ENCODE measurements at regions of chr7 and their contacts with region 1.

Region 1: GRCh38 chr7:85829817-85830432 is 643.1 kb upstream of the SEMA3D start:
- DNase-seq: no peak
- H3K4me3 ChIP-seq: no peak overlapping the region
- H3K27ac ChIP-seq: no peak overlapping the region
- H3K4me1 ChIP-seq: no peaks in the 10 kb centered on the region
- H3K27me3 ChIP-seq: no peaks in the 10 kb centered on the region
- CTCF ChIP-seq: peak; percentile 62

Region 2: DNA sequence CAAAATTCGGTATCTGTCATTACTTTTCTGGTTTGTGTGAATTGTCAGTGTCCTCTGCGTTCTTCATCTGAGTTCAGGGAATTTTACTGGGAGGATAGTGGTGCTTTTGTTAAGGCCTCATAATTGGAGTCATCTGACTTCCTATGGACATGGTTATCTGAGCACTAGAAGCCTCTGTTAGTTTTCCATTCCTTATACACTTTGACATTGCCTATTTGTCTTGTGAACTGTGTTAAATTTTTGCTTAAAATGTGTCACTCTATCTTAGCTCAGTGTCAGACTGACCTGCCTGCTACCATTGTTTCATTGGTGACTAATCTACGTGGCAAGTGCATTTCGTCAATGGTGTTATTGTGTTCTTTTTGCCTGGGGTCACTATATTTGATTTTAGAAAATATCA is 1888.6 kb before region 1 on chr7:
- CTCF ChIA-PET with region 1: interaction called, 3 read pairs
- POLR2A ChIA-PET with region 1: no interaction called
- intact Hi-C with region 1: loop called (anchors 5 kb)
- DNase-seq: no peak
- H3K4me3 ChIP-seq: no peak overlapping the region
- H3K27ac ChIP-seq: no peak overlapping the region
- H3K4me1 ChIP-seq: no peaks in the 10 kb centered on the region
- H3K27me3 ChIP-seq: no peaks in the 10 kb centered on the region
- CTCF ChIP-seq: no peak

Region 3: GRCh38 chr7:85030893-85031292 is 799.0 kb before region 1 on chr7:
- CTCF ChIA-PET with region 1: interaction called, 11 read pairs
- POLR2A ChIA-PET with region 1: no interaction called
- intact Hi-C with region 1: loop called (anchors 1 kb)
- DNase-seq: no peak
- H3K4me3 ChIP-seq: no peak overlapping the region
- H3K27ac ChIP-seq: no peak overlapping the region
- H3K4me1 ChIP-seq: no peaks in the 10 kb centered on the region
- H3K27me3 ChIP-seq: no peaks in the 10 kb centered on the region
- CTCF ChIP-seq: peak; percentile 81

Region 4: GRCh38 chr7:85186521-85187241 is 643.2 kb before region 1 on chr7 and contains the start of gene SEMA3D:
- CTCF ChIA-PET with region 1: no interaction called
- POLR2A ChIA-PET with region 1: no interaction called
- intact Hi-C with region 1: loop called (anchors 10 kb)
- DNase-seq: peak; percentile 34 to 85
- H3K4me3 ChIP-seq: peak within 1 kb of the TSS; percentile 63
- H3K27ac ChIP-seq: no peak within 1 kb of the TSS
- H3K4me1 ChIP-seq: no peaks in the 10 kb centered on the region
- H3K27me3 ChIP-seq: peaks cover 13% of the 10 kb centered on the region; the same call in 1 of the 2 replicates
- CTCF ChIP-seq: peak; percentile 74
- total RNA-seq, gene SEMA3D: 2.6 and 4.8 TPM in 2 replicates